Colonic mucosa (tissue), 4 donors: ENCODE measurements at regions of chr4 and their contacts with region 1.

Region 1: GRCh38 chr4:185638548-185639301 is 103.4 kb upstream of the PDLIM3 start:
- DNase-seq: no peak
- H3K4me3 ChIP-seq: no peak overlapping the region
- H3K27ac ChIP-seq: no peak overlapping the region
- H3K4me1 ChIP-seq: no peaks in the 10 kb centered on the region
- H3K27me3 ChIP-seq: no peaks in the 10 kb centered on the region
- CTCF ChIP-seq: no peak

Region 2: GRCh38 chr4:185457136-185457535 is 181.6 kb before region 1 on chr4:
- intact Hi-C with region 1: no loop called
- DNase-seq: no peak
- H3K4me3 ChIP-seq: no peak overlapping the region
- H3K27ac ChIP-seq: no peak overlapping the region
- H3K4me1 ChIP-seq: no peaks in the 10 kb centered on the region
- H3K27me3 ChIP-seq: no peaks in the 10 kb centered on the region
- CTCF ChIP-seq: no peak

Region 3: GRCh38 chr4:186021461-186022167 is 382.9 kb after region 1 on chr4:
- intact Hi-C with region 1: loop called (anchors 5 kb)
- DNase-seq: no peak
- H3K4me3 ChIP-seq: no peak overlapping the region
- H3K27ac ChIP-seq: no peak overlapping the region
- H3K4me1 ChIP-seq: no peaks in the 10 kb centered on the region
- H3K27me3 ChIP-seq: no peaks in the 10 kb centered on the region
- CTCF ChIP-seq: peak; percentile 57

Region 4: DNA sequence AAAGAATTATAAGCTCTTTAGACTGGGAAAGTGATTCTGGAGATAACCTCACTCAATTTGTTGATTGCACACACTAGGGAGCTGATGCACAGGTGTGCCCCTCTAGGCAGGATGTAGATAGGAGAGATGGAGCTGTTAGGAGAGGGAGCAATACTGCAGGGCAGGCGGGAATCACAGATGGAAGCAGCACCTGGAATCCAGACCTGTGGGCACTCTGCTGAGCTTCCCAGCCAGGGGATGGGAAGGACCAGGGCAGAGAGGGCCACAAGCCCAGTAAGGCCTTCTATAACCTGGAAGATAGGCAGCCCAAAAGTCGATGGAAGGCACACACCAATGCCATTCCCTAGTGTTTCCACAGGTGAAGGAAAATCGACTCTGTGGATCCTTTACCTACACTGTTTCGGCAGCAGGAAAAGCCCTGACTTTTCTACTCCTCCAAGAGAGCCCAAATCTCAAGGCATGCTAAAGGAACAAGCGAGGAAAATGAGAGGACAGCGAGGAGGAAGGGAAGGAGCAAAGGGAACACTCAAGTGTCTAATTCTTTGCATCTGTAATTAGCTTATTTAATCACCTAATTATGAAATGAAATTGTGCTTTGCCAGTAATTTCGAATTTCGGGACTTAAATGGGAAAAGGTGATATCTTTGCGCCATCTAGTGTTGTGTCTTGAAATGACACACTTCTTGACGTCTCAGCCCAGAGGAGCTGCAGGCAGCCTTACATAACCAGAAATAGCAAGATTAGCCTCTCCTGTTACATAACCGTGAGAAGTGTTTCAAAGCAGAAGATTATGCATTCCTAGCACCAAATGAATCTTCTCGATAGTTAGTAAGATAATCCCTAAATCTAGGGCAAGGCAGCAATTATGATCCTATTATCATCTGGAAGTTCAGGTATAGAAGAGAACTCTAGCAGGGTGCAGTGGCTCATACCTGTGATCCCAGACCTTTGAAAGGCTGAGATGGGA is 399.2 kb after region 1 on chr4:
- intact Hi-C with region 1: loop called (anchors 5 kb)
- DNase-seq: peak; percentile 61
- H3K4me3 ChIP-seq: no peak overlapping the region
- H3K27ac ChIP-seq: no peak overlapping the region
- H3K4me1 ChIP-seq: no peaks in the 10 kb centered on the region
- H3K27me3 ChIP-seq: no peaks in the 10 kb centered on the region
- CTCF ChIP-seq: peak; percentile 49